ENCODE measurements at regions of chr7 and their contacts with region 1.

Region 1: DNA sequence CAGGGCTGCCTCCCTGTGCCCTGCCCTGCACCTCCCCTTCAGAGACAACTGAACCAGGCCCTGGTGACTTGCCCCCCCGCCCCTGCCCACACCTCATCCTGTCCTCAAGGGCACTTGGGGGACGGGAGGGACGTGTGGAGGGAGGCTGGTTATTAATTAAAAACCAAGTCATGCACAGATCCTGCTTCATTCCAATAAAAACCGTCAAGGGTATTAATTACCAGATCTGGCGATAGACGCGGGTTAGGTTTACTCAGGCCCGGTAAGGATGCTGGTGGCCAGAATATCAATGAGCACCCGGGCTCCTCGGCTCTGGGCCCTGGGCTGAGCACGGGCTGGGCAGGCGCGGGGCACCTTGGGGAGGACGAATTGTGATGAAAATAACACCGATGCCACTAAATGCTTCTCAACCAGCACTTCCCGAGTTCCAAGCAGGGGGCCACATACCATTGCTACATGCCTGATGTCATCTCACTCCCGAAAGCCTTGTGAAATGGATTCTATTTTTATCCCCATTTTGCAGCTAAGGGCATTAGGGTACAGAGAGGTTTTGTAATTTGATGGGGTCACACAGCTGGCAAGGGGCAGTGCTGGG is 24.5 kb upstream of the GTF2IRD1 start:
- H3K4me3 ChIP-seq: no peak overlapping the region
- H3K27ac ChIP-seq: no peak overlapping the region
- H3K4me1 ChIP-seq: no peaks in the 10 kb centered on the region
- CTCF ChIP-seq: no peak

Region 2: DNA sequence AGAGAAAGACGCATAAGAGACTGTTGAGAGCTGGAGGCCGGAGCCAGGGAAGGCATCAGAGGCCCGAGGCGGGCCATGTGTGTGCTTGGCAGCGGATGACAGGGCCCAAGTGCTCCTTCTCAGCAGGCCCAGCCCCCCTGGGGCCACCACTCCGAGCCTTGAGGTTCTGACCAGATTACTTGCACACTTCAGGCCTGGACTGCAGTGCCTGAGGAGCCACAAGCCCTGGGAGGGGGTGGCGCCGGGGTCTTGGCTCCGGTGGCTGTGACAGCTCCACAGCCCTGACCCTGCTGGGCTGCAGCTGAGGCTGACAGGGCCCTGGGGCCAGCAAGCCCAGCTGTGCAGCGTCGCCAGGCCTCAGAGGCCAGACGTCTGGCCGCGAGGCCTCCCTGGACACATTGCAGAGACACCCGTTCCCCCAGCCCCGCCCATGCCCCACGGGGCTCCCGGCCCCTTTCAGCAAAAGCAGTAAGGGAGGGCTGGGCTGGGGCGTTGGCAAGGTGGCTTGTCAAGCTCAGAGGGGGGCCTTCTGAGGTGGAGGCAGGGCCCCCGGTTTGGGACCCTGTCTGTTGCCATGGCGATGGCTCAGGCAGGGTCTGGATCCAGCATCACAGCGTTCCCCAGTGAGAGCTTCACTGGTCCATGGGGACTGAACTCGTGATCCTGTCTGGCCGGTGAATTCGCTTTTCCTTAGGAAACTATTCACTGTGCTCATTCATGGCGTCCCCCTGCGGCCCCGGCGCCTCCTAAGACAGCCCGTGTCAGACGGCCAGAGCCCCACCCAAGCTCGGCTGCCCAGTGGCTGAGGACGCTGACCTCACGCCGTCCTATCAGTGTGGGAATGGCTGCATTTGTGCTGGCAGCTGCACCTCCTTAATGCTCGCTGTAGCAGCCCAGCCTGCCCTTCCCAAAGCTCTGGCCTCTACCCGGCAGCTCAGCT is 395.6 kb before region 1 on chr7:
- CTCF ChIA-PET with region 1: no interaction called
- POLR2A ChIA-PET with region 1: no interaction called
- H3K4me3 ChIP-seq: no peak overlapping the region
- H3K27ac ChIP-seq: no peak overlapping the region
- H3K4me1 ChIP-seq: no peaks in the 10 kb centered on the region
- CTCF ChIP-seq: no peak

Region 3: GRCh38 chr7:74306004-74306729 is 123.1 kb before region 1 on chr7:
- CTCF ChIA-PET with region 1: no interaction called
- POLR2A ChIA-PET with region 1: no interaction called
- H3K4me3 ChIP-seq: no peak overlapping the region
- H3K27ac ChIP-seq: no peak overlapping the region
- H3K4me1 ChIP-seq: no peaks in the 10 kb centered on the region
- CTCF ChIP-seq: no peak

Region 4: GRCh38 chr7:74417419-74417971 is 11.8 kb before region 1 on chr7:
- CTCF ChIA-PET with region 1: interaction called, 12 read pairs
- POLR2A ChIA-PET with region 1: no interaction called
- H3K4me3 ChIP-seq: no peak overlapping the region
- H3K27ac ChIP-seq: no peak overlapping the region
- H3K4me1 ChIP-seq: no peaks in the 10 kb centered on the region
- CTCF ChIP-seq: peak; percentile 80